Caco-2 (cell line): ENCODE measurements at regions of chr3 and their contacts with region 1.

Region 1: GRCh38 chr3:27368831-27369607 is at the start of gene NEK10:
- DNase-seq: peak; percentile 90 to 93
- H3K4me3 ChIP-seq: peak within 1 kb of the TSS; percentile 71
- H3K4me3 Mint-ChIP-seq: peak within 1 kb of the TSS; percentile 93
- H3K27ac Mint-ChIP-seq: peak within 1 kb of the TSS; percentile 51
- H3K4me1 ChIP-seq: no peaks in the 10 kb centered on the region
- H3K4me1 Mint-ChIP-seq: no peaks in the 10 kb centered on the region
- H3K27me3 ChIP-seq: no peaks in the 10 kb centered on the region
- H3K27me3 Mint-ChIP-seq: peaks cover 2% of the 10 kb centered on the region
- CTCF ChIP-seq: peak; percentile 6 to 20
- total RNA-seq, gene NEK10: 0.30 and 0.39 TPM in 2 replicates

Region 2: DNA sequence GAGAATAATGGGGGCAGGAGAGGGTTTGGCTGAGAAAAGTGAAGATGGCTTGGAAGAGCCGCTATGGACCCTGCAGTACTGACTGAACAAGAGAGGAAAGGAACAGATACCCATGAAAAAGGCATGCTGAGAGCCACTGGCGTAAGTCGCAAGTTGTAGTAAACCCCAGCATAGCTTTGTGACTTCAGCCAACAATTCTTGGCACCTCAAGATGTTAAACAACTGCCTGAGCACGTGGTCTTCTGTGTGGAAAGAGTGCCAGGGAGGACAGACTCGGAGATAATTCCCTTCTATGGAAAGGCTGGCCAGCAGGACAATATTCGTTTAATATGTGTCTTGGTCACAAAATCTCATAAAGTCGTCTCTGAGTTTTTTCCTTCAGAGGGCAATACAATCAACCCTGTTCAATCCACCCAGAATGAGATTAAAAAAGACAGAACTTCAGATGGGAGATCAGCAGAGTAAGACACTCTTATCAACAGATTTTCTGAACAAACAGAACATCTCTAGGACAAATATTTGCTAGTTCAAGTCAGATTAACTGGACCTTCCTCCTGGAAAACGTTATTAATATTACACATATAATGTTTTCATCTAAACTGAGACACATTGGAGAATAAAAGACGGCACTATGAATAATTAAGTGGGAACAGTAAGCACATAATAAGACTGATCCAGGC is 49.0 kb before region 1 on chr3:
- CTCF ChIA-PET with region 1: no interaction called
- POLR2A ChIA-PET with region 1: no interaction called
- intact Hi-C with region 1: loop called (anchors 1 kb)
- DNase-seq: no peak
- H3K4me3 ChIP-seq: no peak overlapping the region
- H3K4me3 Mint-ChIP-seq: no peak overlapping the region
- H3K27ac Mint-ChIP-seq: no peak overlapping the region
- H3K4me1 ChIP-seq: peaks cover 3% of the 10 kb centered on the region; the same call in 1 of the 2 replicates
- H3K4me1 Mint-ChIP-seq: peaks cover 8% of the 10 kb centered on the region
- H3K27me3 ChIP-seq: no peaks in the 10 kb centered on the region
- H3K27me3 Mint-ChIP-seq: no peaks in the 10 kb centered on the region
- CTCF ChIP-seq: no peak